ENCODE measurements at regions of chr18 and their contacts with region 1.

Region 1: GRCh38 chr18:712401-713134 is at the start of gene ENOSF1:
- DNase-seq: peak; percentile 96
- H3K4me3 Mint-ChIP-seq: peak within 1 kb of the TSS; percentile 90
- H3K27ac Mint-ChIP-seq: peak within 1 kb of the TSS; percentile 92
- H3K4me1 Mint-ChIP-seq: peaks cover 29% of the 10 kb centered on the region
- H3K27me3 Mint-ChIP-seq: no peaks in the 10 kb centered on the region
- total RNA-seq, gene ENOSF1: 85.2 and 91.8 TPM in 2 replicates

Region 2: GRCh38 chr18:623761-624620 is 88.6 kb before region 1 on chr18:
- intact Hi-C with region 1: loop called (anchors 5 kb)
- DNase-seq: peak; percentile 89
- H3K4me3 Mint-ChIP-seq: no peak overlapping the region
- H3K27ac Mint-ChIP-seq: no peak overlapping the region
- H3K4me1 Mint-ChIP-seq: peaks cover 2% of the 10 kb centered on the region
- H3K27me3 Mint-ChIP-seq: peaks cover 41% of the 10 kb centered on the region

Region 3: DNA sequence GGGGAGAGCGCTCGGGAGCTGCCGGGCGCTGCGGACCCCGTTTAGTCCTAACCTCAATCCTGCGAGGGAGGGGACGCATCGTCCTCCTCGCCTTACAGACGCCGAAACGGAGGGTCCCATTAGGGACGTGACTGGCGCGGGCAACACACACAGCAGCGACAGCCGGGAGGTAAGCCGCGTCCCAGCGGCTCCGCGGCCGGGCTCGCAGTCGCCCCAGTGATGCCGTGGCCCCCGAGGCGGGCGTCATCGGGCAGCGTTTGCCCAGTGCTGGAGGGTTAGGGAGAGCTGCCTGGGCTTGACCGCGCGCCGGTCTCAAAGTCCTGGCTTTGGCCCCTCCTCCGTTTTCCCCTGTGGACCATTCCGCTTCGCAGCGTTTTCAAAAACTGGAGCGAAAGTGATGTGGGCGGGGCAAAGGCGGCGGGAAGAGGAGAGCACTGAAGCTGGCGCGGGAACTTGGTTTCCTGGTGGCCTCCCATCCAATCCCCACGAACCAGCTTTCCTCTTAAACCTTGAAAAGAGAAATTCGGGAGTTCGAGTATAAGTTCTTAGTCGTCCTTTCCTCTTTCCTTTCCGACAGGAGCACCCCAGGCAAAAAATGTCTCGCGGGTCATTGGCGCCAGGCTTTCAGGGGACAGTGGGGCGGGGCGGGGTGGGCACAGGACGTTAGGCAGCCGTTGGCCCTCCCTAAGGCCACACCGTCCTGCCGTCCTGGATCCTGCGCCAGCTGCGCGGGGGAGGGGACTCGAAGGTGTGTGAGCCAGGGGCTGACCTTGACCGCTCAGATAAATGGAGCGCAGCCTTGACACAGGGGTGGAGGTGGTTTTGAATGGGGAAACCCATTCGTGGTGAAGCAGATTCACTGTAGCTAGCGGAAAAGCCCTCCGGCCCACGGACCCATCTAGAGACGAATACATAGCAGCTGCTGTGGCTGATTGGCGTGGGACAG is 54.3 kb before region 1 on chr18:
- intact Hi-C with region 1: loop called (anchors 1 kb)
- DNase-seq: peak; percentile 94
- H3K4me3 Mint-ChIP-seq: peak overlapping the region; percentile 96
- H3K27ac Mint-ChIP-seq: peak overlapping the region; percentile 96
- H3K4me1 Mint-ChIP-seq: peaks cover 42% of the 10 kb centered on the region
- H3K27me3 Mint-ChIP-seq: no peaks in the 10 kb centered on the region

Region 4: GRCh38 chr18:670522-670921 is 42.0 kb before region 1 on chr18:
- intact Hi-C with region 1: no loop called
- DNase-seq: no peak
- H3K4me3 Mint-ChIP-seq: no peak overlapping the region
- H3K27ac Mint-ChIP-seq: peak overlapping the region; percentile 25
- H3K4me1 Mint-ChIP-seq: peaks cover 17% of the 10 kb centered on the region
- H3K27me3 Mint-ChIP-seq: no peaks in the 10 kb centered on the region

Region 5: GRCh38 chr18:681985-682384 is 30.6 kb before region 1 on chr18:
- intact Hi-C with region 1: loop called (anchors 2 kb)
- DNase-seq: peak; percentile 92
- H3K4me3 Mint-ChIP-seq: peak overlapping the region; percentile 55
- H3K27ac Mint-ChIP-seq: peak overlapping the region; percentile 88
- H3K4me1 Mint-ChIP-seq: peaks cover 23% of the 10 kb centered on the region
- H3K27me3 Mint-ChIP-seq: no peaks in the 10 kb centered on the region

Region 6: DNA sequence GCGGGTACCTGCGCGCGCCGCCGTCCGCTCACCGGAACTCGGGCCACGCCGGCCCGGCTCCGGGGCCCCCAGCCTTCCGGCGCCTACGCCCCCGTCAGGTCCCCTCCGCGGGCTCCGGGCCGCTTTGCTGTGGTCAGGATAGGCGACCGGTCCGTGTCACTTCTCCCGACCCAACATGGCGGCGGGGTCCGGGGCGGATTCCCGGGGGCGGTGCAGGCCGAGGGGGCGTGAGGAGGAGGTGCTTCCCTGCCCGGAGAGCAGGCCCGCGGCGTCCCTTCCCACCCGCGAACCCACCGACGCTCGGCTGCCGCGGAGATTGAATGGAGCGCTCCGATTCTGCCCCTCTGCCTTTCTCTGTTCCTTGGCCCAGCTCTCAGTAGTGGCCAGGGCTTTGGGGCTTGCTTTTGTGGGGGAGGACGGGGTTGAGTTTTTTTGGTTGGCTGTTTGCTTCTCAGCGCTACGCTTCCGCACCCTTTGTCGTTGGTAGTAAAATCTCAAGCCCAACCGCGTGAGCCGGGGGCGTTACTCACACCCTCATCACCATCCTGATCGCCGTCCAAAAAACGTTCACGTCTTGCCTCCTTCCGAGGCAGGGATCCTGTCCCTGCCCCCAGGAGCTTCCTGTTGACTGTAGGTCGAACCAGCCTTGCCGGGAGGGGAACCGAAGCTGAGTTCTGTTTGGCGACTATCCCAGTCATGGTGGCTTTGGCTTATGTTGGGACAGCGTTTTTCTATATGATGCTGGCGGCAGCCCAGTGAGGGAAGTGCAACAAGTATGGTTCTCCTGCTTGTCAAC is 100.0 kb after region 1 on chr18:
- intact Hi-C with region 1: loop called (anchors 1 kb)
- DNase-seq: peak; percentile 95
- H3K4me3 Mint-ChIP-seq: peak overlapping the region; percentile 97
- H3K27ac Mint-ChIP-seq: peak overlapping the region; percentile 100
- H3K4me1 Mint-ChIP-seq: peaks cover 65% of the 10 kb centered on the region
- H3K27me3 Mint-ChIP-seq: peaks cover 3% of the 10 kb centered on the region

Region 7: DNA sequence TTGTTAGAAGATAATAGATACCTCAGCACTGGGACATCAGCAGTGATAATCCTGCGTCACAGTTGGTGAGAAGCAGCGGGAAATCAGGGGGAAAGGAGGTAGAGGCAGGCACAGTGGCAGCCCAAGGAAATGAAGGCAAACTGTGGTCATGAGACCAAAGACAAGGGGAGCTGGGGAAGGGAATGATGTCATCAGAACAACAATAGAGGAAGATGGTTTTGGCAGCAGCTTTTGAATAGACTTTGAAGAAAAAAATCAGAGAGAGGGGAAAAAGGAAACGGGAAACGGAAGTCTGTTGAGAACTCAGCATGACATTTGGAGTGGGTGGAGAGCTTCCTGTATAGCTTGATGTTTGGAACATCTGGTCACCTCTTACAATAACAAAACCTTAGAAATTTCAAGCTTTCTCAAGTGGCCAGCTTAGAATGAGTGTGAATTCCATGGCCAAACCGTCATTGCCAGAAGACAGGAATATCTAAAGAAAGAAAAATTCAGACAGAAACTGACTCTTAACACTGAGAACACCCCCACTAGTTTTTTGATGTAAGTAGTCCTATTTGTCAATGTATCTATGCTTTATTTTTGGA is 117.8 kb after region 1 on chr18:
- intact Hi-C with region 1: loop called (anchors 1 kb)
- DNase-seq: peak; percentile 78
- H3K4me3 Mint-ChIP-seq: peak overlapping the region; percentile 32
- H3K27ac Mint-ChIP-seq: peak overlapping the region; percentile 75
- H3K4me1 Mint-ChIP-seq: peaks cover 25% of the 10 kb centered on the region
- H3K27me3 Mint-ChIP-seq: peaks cover 9% of the 10 kb centered on the region

Region 8: GRCh38 chr18:839224-840022 is 126.9 kb after region 1 on chr18:
- intact Hi-C with region 1: loop called (anchors 1 kb)
- DNase-seq: peak; percentile 96
- H3K4me3 Mint-ChIP-seq: no peak overlapping the region
- H3K27ac Mint-ChIP-seq: no peak overlapping the region
- H3K4me1 Mint-ChIP-seq: peaks cover 5% of the 10 kb centered on the region
- H3K27me3 Mint-ChIP-seq: peaks cover 13% of the 10 kb centered on the region

Measured in activated CD4-positive, alpha-beta T cell treated with anti-CD3 and anti-CD28 coated beads, Interleukin-2, amount 10 ng/mL, durations not matched to agents 24 days and 14 days (primary cell).